Psoas muscle (tissue), 8 donors: ENCODE measurements at regions of chr14 and their contacts with region 1.

Region 1: DNA sequence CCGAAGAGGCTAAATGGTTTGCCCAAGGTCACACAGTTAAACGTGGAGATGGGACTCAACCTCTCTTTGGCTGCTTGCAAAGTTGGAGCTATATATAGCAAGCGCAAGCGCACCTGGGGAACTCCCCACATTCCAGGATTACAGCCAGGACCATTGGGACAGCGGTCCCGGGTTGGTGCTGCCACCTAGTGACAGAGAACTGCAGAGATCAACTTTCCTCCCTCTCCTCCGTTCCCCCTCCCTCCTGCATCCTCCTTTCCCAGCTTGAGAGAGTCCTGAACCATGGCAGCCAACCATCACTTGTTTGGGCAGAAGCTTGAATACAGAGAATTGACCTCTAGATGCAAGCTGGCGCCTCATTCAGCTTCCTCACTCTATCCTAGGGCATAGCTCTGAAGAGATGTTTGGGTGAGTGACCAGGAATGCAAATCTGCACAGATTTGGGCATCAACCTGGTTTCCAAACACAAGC is 17.4 kb upstream of the FLVCR2 start:
- DNase-seq: peak; percentile 62 to 83
- ATAC-seq: peak; percentile 78 to 87 (median 85)
- H3K4me3 ChIP-seq: no peak overlapping the region
- H3K27ac ChIP-seq: no peak overlapping the region
- H3K4me1 ChIP-seq: peaks cover 29% of the 10 kb centered on the region
- H3K27me3 ChIP-seq: no peaks in the 10 kb centered on the region
- CTCF ChIP-seq: peak; percentile 79

Region 2: GRCh38 chr14:75307700-75308379 is 253.2 kb before region 1 on chr14:
- intact Hi-C with region 1: loop called in 1 of 2 experiments (anchors 5 kb)
- DNase-seq: peak; percentile 85 to 92
- ATAC-seq: peak; percentile 78 to 85 (median 81)
- H3K4me3 ChIP-seq: no peak overlapping the region
- H3K27ac ChIP-seq: no peak overlapping the region
- H3K4me1 ChIP-seq: peaks cover 13% of the 10 kb centered on the region
- H3K27me3 ChIP-seq: no peaks in the 10 kb centered on the region
- CTCF ChIP-seq: peak; percentile 94

Region 3: DNA sequence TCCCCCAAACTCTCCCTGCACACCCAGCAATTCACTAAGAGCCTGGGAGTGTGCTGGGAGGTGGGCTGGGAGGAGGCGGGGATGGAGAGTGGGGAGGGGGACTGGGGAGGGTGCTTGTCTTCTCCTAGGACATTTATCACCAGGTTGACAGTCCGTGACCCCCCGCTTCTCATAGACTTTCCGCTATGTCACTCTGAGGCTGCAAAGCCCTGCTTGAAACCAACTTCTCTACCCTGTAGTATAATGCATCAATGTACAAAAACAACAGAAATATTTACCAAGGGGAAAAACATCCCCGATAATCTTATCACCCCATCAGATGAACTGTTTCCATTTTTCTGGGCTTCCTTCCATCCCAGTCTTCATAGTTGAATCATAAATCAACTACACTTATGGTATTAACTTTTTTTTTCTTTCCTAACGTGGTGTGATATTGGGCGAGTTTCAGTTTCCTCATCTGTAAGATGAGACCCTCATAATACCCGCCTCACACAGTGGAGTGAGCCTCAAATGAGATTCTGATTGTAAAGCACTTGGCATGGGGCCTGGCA is 67.3 kb before region 1 on chr14:
- intact Hi-C with region 1: loop called in 1 of 2 experiments (anchors 5 kb)
- DNase-seq: no peak
- ATAC-seq: no peak
- H3K4me3 ChIP-seq: no peak overlapping the region
- H3K27ac ChIP-seq: no peak overlapping the region
- H3K4me1 ChIP-seq: no peaks in the 10 kb centered on the region
- H3K27me3 ChIP-seq: no peaks in the 10 kb centered on the region
- CTCF ChIP-seq: no peak